ENCODE measurements at regions of chr19 and their contacts with region 1.

Region 1: GRCh38 chr19:39390755-39391592 is at the starts of genes MED29 and PAF1:
- DNase-seq: peak; percentile 100
- H3K4me3 Mint-ChIP-seq: peak within 1 kb of the TSS; percentile 93
- H3K27ac Mint-ChIP-seq: peak within 1 kb of the TSS; percentile 98
- H3K4me1 Mint-ChIP-seq: peaks cover 12% of the 10 kb centered on the region
- H3K27me3 Mint-ChIP-seq: no peaks in the 10 kb centered on the region
- CTCF ChIP-seq: no peak
- total RNA-seq, gene MED29: 24.3 and 31.7 TPM in 2 replicates
- total RNA-seq, gene PAF1: 47.0 and 48.5 TPM in 2 replicates

Region 2: DNA sequence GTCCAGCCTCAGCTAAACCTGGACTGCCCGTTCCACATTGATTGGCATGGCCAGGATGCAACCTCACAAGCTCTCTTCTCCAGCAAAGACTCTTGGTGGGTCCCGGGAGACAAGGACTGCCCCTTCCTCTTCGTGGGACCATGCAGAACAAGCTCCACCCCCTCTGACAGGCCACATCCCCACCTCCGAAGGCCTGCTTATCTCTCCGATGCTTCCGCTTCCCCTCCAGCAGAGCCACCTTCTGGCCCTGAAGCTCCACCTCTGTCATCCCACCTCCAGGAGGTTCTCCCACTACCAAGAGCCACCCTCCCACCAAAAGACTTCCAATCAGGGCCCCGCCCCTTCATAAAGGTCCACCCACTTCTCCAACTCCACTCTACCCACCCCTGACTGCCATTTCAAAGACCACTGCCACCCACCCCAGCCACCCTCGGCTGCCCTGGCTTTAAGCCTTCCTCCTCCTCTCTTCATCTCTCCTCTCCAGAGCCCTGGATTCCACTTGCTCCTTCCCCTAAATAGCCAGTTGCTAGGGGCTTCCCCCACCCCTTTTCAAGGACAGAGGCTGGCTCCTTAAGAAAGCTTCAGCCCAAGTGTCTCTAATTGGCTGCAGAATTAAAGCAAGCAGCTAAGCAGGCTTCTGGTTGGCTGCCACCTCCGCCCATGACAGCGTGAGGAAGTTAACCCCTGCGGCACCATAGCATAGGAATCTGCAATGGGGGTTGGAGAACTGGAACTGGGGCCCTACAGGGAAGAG is 80.2 kb before region 1 on chr19:
- CTCF ChIA-PET with region 1: no interaction called
- POLR2A ChIA-PET with region 1: no interaction called
- intact Hi-C with region 1: no loop called
- DNase-seq: no peak
- H3K4me3 Mint-ChIP-seq: no peak overlapping the region
- H3K27ac Mint-ChIP-seq: no peak overlapping the region
- H3K4me1 Mint-ChIP-seq: peaks cover 6% of the 10 kb centered on the region
- H3K27me3 Mint-ChIP-seq: peaks cover 16% of the 10 kb centered on the region
- CTCF ChIP-seq: no peak

Region 3: DNA sequence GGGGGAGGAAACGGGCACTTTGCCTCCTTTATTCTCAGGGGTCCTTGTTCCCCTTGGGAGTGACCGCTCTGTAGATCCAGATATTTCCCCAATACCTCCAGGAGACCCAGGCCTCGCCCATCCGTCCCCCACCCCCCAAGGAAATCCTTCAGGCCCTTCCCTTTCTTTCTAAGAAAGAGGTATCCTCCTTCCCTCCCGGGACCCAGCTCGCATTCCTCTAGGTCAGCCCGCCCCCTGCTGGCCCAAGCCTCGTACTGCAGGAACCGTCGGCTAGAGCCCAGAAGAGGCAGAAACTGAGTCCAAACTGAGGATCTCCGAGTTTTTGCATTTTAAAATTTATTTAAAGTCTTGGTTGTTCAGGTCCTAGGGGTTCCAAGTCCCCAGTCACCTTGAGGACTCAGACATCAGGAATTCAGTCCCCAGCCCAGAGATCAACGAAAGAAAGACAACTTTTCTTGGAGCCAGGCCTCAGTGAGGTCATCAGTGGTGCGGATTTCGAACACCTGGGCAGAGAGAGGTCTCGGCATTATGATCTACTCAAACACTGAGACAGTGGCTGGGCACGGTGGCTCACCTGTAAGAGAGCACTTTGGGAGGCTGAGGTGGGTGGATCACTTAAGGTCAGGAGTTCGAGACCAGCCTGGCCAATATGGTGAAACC is 62.8 kb before region 1 on chr19:
- CTCF ChIA-PET with region 1: no interaction called
- POLR2A ChIA-PET with region 1: no interaction called
- intact Hi-C with region 1: no loop called
- DNase-seq: peak; percentile 80
- H3K4me3 Mint-ChIP-seq: no peak overlapping the region
- H3K27ac Mint-ChIP-seq: no peak overlapping the region
- H3K4me1 Mint-ChIP-seq: no peaks in the 10 kb centered on the region
- H3K27me3 Mint-ChIP-seq: no peaks in the 10 kb centered on the region
- CTCF ChIP-seq: peak; percentile 95

Region 4: GRCh38 chr19:39341719-39342604 is 49.0 kb before region 1 on chr19 and contains the start of gene SAMD4B:
- CTCF ChIA-PET with region 1: interaction called, 5 read pairs
- POLR2A ChIA-PET with region 1: interaction called, 6 read pairs
- intact Hi-C with region 1: loop called (anchors 5 kb)
- DNase-seq: peak; percentile 98
- H3K4me3 Mint-ChIP-seq: peak within 1 kb of the TSS; percentile 100
- H3K27ac Mint-ChIP-seq: peak within 1 kb of the TSS; percentile 97
- H3K4me1 Mint-ChIP-seq: peaks cover 48% of the 10 kb centered on the region
- H3K27me3 Mint-ChIP-seq: no peaks in the 10 kb centered on the region
- CTCF ChIP-seq: peak; percentile 79
- total RNA-seq, gene SAMD4B: 65.4 and 94.2 TPM in 2 replicates

Region 5: DNA sequence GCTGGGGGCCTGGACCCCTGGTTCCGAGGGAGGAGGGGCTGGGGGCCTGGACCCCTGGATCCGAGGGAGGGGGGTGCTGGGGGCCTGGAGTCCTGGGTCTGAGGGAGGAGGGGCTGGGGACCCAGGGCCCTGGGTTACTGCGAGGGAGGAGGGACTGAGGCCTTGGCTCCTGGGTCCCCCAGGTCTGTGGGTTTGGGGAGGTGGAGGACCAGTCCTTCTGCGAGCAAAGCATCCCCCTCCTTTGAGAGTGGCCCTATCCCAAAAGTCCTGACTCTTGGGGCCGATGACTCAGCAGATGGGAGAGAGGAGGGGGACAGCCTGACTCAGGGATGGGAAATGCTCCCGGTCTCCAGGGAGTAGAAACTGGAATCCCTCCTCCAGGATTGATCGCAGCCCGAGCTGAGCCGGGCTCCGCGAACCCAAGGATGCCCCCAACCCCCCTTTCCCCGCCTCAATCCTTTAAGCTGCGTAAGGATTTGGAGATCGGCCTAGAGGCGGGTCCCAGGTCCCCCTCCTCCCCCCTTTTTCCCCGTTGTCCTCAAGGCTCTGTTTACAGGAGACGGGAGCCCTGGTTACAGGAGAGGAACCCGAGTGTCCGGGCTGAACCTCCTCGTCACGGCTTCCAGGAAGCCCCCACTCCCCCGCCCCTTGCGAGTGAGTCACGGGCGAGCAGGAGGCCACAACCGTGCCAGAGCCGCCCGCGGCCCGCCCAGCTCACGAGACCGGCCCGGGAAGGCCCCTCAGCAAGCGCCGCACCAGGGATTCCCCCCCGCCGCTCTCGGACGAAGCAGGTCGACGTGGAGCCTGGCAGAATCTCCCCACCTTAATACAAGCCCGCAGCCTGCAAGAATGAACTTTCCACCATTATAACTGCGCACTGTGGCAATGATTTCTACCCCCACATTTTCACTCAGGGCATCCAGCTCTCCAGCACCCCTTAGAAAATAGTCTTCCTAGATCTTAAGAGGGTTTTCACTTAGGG is 12.6 kb after region 1 on chr19:
- CTCF ChIA-PET with region 1: interaction called, 3 read pairs
- POLR2A ChIA-PET with region 1: interaction called, 121 read pairs
- intact Hi-C with region 1: no loop called
- DNase-seq: peak; percentile 99
- H3K4me3 Mint-ChIP-seq: peak overlapping the region; percentile 80
- H3K27ac Mint-ChIP-seq: peak overlapping the region; percentile 100
- H3K4me1 Mint-ChIP-seq: peaks cover 39% of the 10 kb centered on the region
- H3K27me3 Mint-ChIP-seq: no peaks in the 10 kb centered on the region
- CTCF ChIP-seq: no peak